ENCODE measurements at regions of chr17 and their contacts with region 1.

Region 1: DNA sequence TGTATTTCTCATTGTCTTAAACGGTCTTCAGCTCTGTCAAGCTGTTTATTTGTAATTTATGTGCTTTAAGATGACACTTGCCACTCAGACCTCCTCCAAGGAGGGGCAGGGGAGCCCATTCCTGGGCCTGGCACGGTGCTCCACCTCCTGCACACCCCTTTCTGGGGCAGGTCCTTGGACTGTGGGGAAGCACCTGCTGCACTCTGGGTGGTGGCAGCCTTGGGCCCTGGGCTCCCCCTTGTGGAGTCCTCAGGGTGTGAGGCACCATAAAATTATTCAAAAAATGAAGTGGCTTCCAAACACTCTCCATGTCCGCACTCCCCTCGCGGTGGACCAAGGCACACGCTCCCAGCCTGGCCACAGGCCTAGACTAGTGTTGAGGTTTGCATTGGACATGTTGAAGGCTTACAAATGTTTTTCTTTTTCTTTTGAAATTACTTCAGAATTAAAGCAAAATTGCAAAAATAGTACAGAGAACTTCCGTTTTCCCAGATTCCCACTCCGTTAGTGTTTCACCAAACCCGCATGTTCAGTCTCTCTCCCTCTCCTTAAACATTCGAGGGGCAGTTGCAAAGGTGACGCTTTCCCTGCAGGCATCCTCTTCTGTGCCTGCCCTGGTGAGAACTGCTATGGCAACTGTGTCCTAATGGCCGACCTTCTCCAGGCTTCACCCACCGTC is 32.4 kb downstream of the FOXK2 start:
- DNase-seq: peak; percentile 71
- ATAC-seq: peak; percentile 99
- H3K4me3 Mint-ChIP-seq: no peak overlapping the region
- H3K27ac Mint-ChIP-seq: no peak overlapping the region
- H3K4me1 Mint-ChIP-seq: peaks cover 49% of the 10 kb centered on the region
- H3K27me3 Mint-ChIP-seq: no peaks in the 10 kb centered on the region
- CTCF ChIP-seq: no peak

Region 2: GRCh38 chr17:82230627-82231311 is 321.1 kb before region 1 on chr17:
- CTCF ChIA-PET with region 1: no interaction called
- POLR2A ChIA-PET with region 1: no interaction called
- intact Hi-C with region 1: loop called (anchors 10 kb)
- DNase-seq: peak; percentile 68
- ATAC-seq: peak; percentile 49
- H3K4me3 Mint-ChIP-seq: peak overlapping the region; percentile 78
- H3K27ac Mint-ChIP-seq: no peak overlapping the region
- H3K4me1 Mint-ChIP-seq: peaks cover 33% of the 10 kb centered on the region
- H3K27me3 Mint-ChIP-seq: no peaks in the 10 kb centered on the region
- CTCF ChIP-seq: no peak

Region 3: DNA sequence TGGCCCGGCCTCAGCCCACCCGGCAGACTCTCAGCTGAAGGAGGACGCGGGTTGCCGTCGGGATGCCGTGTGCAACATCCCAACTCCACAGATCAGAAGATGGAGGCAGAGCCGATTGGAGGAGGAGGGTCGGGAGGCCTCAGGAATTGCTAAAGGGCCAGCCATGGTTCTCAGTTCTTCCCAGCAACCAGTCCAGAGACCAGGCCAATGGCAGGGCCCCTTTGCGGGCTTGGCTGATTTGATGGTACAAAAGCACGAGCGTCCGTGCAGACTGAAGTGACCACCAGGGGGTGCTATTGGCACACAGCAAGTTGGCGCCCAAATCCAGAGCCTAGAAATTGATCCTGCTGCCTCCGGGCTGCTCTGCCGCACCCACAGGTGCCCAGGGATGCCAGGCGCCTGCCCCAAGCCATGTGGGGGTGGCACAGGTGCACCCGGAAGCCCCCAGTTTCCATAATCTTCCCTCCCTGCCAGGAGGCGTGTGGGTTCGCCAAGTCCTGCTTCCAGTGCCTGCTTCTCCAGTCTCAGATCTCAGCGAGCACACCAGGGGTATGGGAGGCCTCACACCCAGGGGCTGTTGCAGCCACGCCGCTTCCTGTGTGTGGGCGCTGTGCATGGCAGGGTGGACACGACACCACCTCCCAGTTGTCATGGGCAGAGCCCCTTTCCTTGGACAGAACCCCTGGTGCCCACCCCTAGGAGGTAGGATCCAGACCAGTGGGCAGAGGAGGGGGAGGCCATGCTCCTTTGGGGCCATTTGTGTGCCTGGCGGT is 200.0 kb before region 1 on chr17:
- CTCF ChIA-PET with region 1: interaction called, 30 read pairs
- POLR2A ChIA-PET with region 1: no interaction called
- intact Hi-C with region 1: loop called (anchors 1 kb)
- DNase-seq: peak; percentile 67
- ATAC-seq: peak; percentile 91
- H3K4me3 Mint-ChIP-seq: no peak overlapping the region
- H3K27ac Mint-ChIP-seq: no peak overlapping the region
- H3K4me1 Mint-ChIP-seq: peaks cover 9% of the 10 kb centered on the region
- H3K27me3 Mint-ChIP-seq: peaks cover 13% of the 10 kb centered on the region
- CTCF ChIP-seq: peak; percentile 70

Region 4: GRCh38 chr17:82457997-82458864 is 93.7 kb before region 1 on chr17 and contains the start of gene NARF:
- CTCF ChIA-PET with region 1: no interaction called
- POLR2A ChIA-PET with region 1: no interaction called
- intact Hi-C with region 1: loop called (anchors 1 kb)
- DNase-seq: peak; percentile 95
- ATAC-seq: peak; percentile 96
- H3K4me3 Mint-ChIP-seq: peak within 1 kb of the TSS; percentile 88
- H3K27ac Mint-ChIP-seq: peak within 1 kb of the TSS; percentile 96
- H3K4me1 Mint-ChIP-seq: peaks cover 19% of the 10 kb centered on the region
- H3K27me3 Mint-ChIP-seq: no peaks in the 10 kb centered on the region
- CTCF ChIP-seq: no peak
- total RNA-seq, gene NARF: 77.8 and 81.9 TPM in 2 replicates

Region 5: DNA sequence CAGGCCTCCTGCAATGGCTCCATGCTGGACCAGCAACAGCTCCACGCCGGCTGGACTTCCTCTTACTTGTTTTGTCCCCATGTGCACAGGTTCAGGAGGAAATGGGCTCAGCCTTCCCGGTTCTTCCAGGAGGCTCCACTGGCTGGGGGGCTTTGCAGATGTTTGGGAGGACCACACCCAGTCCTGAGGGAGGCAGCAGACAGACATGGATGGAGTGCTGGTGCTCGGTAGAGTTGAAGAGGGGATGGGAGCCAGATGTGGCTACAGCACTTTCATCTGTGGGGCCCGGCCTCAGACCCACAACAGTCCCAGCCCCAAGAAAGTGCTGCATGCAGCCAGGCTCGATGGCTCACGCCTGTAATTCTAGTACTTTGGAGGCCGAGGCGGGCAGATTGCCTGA is 71.6 kb before region 1 on chr17:
- CTCF ChIA-PET with region 1: interaction called, 3 read pairs
- POLR2A ChIA-PET with region 1: no interaction called
- intact Hi-C with region 1: loop called (anchors 1 kb)
- DNase-seq: no peak
- ATAC-seq: no peak
- H3K4me3 Mint-ChIP-seq: no peak overlapping the region
- H3K27ac Mint-ChIP-seq: no peak overlapping the region
- H3K4me1 Mint-ChIP-seq: no peaks in the 10 kb centered on the region
- H3K27me3 Mint-ChIP-seq: no peaks in the 10 kb centered on the region
- CTCF ChIP-seq: no peak

Region 6: DNA sequence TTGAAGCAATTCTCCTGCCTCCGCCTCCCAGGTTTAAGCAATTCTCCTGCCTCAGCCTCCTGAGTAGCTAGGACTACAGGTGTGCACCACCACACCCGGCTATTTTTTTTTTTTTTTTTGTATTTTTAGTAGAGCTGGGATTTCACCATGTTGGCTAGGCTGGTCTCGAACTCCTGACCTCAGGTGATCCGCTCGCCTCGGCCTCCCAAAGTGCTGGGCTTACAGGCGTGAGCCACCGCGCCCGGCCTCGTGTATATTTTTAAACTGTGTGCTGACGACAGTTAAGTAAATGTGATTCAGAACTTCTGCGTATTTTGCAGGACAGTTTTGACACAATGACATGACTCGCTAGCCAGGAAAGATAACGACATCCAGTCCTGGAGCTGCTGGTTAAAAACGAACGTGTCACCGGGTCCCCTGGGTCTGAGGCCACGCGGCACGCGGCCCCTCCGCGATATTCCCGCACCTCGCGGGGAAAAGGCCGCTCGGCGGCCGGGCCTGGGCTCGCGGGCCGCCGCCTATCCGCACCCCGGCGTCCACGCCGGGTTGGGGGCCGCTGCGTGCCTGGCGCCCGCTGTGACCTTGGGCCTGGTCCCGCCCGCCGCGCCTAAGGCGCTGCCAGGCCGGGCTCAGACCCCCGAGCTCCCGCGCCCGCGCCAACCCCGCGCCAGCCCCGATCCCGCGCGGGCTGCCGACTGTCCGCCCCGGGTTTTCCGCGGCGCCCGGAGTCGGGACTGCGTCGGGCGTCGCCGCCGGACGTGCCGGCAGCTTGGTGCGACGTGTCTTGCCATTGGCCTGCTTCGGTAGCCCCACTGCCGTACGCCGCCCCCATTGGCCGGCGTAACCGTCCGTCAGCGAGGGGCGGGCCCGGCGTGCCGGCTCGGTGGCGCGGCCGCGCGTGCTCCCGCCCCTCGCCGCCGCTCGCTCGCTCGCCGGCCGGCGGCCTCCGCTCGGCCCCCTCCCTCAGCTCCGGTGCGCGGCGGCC is 32.8 kb before region 1 on chr17 and contains the start of gene FOXK2:
- CTCF ChIA-PET with region 1: interaction called, 3 read pairs
- POLR2A ChIA-PET with region 1: interaction called, 11 read pairs
- intact Hi-C with region 1: loop called (anchors 5 kb)
- DNase-seq: peak; percentile 99
- ATAC-seq: peak; percentile 96
- H3K4me3 Mint-ChIP-seq: peak within 1 kb of the TSS; percentile 86
- H3K27ac Mint-ChIP-seq: peak within 1 kb of the TSS; percentile 89
- H3K4me1 Mint-ChIP-seq: peaks cover 25% of the 10 kb centered on the region
- H3K27me3 Mint-ChIP-seq: no peaks in the 10 kb centered on the region
- CTCF ChIP-seq: no peak
- total RNA-seq, gene FOXK2: 56.4 and 60.4 TPM in 2 replicates

Region 7: DNA sequence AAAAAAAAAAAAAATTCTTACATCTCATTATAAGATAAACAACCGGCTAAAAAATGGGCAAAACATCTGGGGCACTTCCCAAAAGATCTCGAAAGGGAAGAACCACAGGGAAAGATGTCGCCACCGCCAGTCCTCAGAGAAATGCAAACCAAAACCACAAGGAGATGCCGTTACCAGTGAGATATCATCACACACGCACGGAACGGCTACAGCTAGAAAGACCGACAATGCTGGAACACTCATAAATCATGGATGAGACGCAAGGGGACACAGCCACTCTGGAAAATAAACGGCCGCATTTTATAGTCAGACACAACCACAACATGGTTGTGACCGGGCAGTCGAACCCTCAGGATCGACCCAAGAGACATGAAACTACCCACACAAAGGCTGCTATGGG is 71.8 kb after region 1 on chr17:
- CTCF ChIA-PET with region 1: no interaction called
- POLR2A ChIA-PET with region 1: no interaction called
- intact Hi-C with region 1: no loop called
- DNase-seq: no peak
- ATAC-seq: no peak
- H3K4me3 Mint-ChIP-seq: no peak overlapping the region
- H3K27ac Mint-ChIP-seq: no peak overlapping the region
- H3K4me1 Mint-ChIP-seq: no peaks in the 10 kb centered on the region
- H3K27me3 Mint-ChIP-seq: no peaks in the 10 kb centered on the region
- CTCF ChIP-seq: no peak

Measured in activated B cell treated with CpG ODN at 0.5 μM for 24 hours (primary cell).